CD14-positive monocyte (primary cell): ENCODE measurements at regions of chr2 and their contacts with region 1.

Region 1: DNA sequence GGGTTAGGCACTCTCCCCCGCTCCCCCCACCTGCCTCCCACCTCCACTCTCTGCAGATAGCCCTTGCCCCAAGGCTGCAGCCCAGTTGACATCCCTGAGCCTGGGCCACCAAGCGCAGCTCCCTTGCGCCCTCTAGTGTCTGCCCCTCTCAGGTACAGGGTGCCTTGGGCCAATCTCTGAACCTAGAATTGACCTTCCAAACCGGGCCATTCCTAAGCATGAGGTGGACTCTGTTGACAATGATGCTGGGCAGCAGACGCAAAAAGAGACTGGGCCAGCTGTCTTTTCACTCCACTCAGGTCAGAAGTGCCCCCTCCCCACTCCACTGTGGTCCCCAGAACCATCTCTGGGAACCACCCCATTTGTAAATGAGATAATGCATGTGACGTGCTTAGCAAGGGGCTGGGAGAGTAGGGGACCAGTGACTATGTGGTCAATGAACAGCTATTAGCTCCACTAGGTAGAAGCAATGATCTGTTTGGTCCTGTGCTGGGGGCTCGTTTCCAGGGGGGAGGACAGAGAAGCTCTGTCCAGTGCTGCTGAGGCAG is 43.3 kb upstream of the PLB1 start:
- DNase-seq: peak; percentile 72 to 81 (median 78)
- H3K4me3 ChIP-seq: no peak overlapping the region
- H3K4me3 Mint-ChIP-seq: no peak overlapping the region
- H3K27ac ChIP-seq: no peak overlapping the region
- H3K27ac Mint-ChIP-seq: peak overlapping the region in 4 of 7 donors; percentile 70 to 79 (median 75)
- H3K4me1 ChIP-seq: peaks cover 34 to 39% of the 10 kb centered on the region in 2 donors
- H3K4me1 Mint-ChIP-seq: peaks cover 40% of the 10 kb centered on the region
- H3K27me3 ChIP-seq: no peaks in the 10 kb centered on the region
- H3K27me3 Mint-ChIP-seq: peaks cover 0 to 4% (median 2%) of the 10 kb centered on the region in 3 donors
- CTCF ChIP-seq: peak; percentile 93

Region 2: DNA sequence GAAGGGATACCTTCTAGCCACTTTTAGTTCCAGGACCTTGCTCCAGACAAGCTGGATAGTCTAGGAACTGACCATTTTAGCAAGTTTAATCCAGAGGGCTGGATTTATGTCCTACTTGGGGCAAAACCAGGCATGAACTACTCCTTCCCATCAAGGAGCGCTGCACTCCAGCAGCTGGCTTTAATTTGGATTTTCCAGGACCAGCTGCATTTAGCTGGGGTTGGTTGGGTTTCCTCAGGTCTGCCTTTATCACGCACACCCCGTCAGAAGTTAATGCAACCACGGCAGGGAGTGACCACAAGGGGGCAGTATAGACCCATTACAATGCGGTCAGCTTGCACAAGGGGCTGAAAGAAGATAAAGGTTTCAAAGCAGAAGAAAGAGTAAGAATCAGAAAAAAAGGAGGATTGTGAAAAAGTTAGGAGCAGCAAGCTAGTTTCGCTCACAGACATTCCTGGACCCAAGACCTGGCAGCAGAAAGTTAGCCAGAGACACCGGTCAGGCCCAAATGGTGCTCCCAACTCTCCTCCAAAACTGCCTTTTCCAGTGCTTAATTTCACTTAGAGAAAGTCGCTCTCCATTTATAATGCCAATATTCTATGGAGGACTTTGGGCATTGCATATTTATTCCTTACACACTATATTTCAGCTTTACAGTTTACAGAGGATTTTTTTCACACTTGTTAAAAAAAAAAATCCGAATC is 748.8 kb before region 1 on chr2:
- intact Hi-C with region 1: loop called in 1 of 2 experiments (anchors 5 kb)
- DNase-seq: peak; percentile 79 to 90 (median 85)
- H3K4me3 ChIP-seq: no peak overlapping the region
- H3K4me3 Mint-ChIP-seq: no peak overlapping the region
- H3K27ac ChIP-seq: no peak overlapping the region
- H3K27ac Mint-ChIP-seq: peak overlapping the region in 3 of 7 donors; percentile 10 to 68 (median 24)
- H3K4me1 ChIP-seq: peaks cover 22 to 25% of the 10 kb centered on the region in 2 donors
- H3K4me1 Mint-ChIP-seq: peaks cover 26% of the 10 kb centered on the region
- H3K27me3 ChIP-seq: no peaks in the 10 kb centered on the region
- H3K27me3 Mint-ChIP-seq: peaks cover 0 to 1% (median 0%) of the 10 kb centered on the region in 3 donors
- CTCF ChIP-seq: peak; percentile 91

Region 3: GRCh38 chr2:27754138-27754588 is 698.4 kb before region 1 on chr2:
- intact Hi-C with region 1: loop called in 1 of 2 experiments (anchors 10 kb)
- DNase-seq: peak; percentile 69 to 79 (median 74)
- H3K4me3 ChIP-seq: no peak overlapping the region
- H3K4me3 Mint-ChIP-seq: no peak overlapping the region
- H3K27ac ChIP-seq: peak overlapping the region in 1 of 2 donors; percentile 75
- H3K27ac Mint-ChIP-seq: peak overlapping the region in 6 of 7 donors; percentile 33 to 93 (median 72)
- H3K4me1 ChIP-seq: peaks cover 44 to 50% of the 10 kb centered on the region in 2 donors
- H3K4me1 Mint-ChIP-seq: peaks cover 47% of the 10 kb centered on the region
- H3K27me3 ChIP-seq: no peaks in the 10 kb centered on the region
- H3K27me3 Mint-ChIP-seq: no peaks in the 10 kb centered on the region
- CTCF ChIP-seq: peak; percentile 95

Region 4: GRCh38 chr2:28413142-28413898 is 39.3 kb before region 1 on chr2:
- intact Hi-C with region 1: loop called (anchors 5 kb)
- DNase-seq: no peak
- H3K4me3 ChIP-seq: no peak overlapping the region
- H3K4me3 Mint-ChIP-seq: no peak overlapping the region
- H3K27ac ChIP-seq: peak overlapping the region; percentile 15 to 61
- H3K27ac Mint-ChIP-seq: peak overlapping the region; percentile 35 to 95 (median 82)
- H3K4me1 ChIP-seq: peaks cover 23 to 52% of the 10 kb centered on the region in 2 donors
- H3K4me1 Mint-ChIP-seq: peaks cover 65% of the 10 kb centered on the region
- H3K27me3 ChIP-seq: no peaks in the 10 kb centered on the region
- H3K27me3 Mint-ChIP-seq: peaks cover 0 to 3% (median 2%) of the 10 kb centered on the region in 3 donors
- CTCF ChIP-seq: peak; percentile 33